CD8-positive, alpha-beta T cell (primary cell): ENCODE measurements at regions of chr4 and their contacts with region 1.

Region 1: GRCh38 chr4:98658287-98659105 is at the start of gene TSPAN5:
- DNase-seq: peak; percentile 49 to 90 (median 82)
- ATAC-seq: peak; percentile 64
- H3K4me3 ChIP-seq: peak within 1 kb of the TSS; percentile 81 to 86
- H3K4me3 Mint-ChIP-seq: peak within 1 kb of the TSS; percentile 97
- H3K27ac ChIP-seq: peak within 1 kb of the TSS; percentile 14 to 60
- H3K27ac Mint-ChIP-seq: peak within 1 kb of the TSS; percentile 88
- H3K4me1 ChIP-seq: peaks cover 56% of the 10 kb centered on the region
- H3K4me1 Mint-ChIP-seq: peaks cover 80% of the 10 kb centered on the region
- H3K27me3 ChIP-seq: no peaks in the 10 kb centered on the region
- H3K27me3 Mint-ChIP-seq: no peaks in the 10 kb centered on the region
- CTCF ChIP-seq: no peak
- total RNA-seq, gene TSPAN5: 1.6 to 1.9 TPM

Region 2: DNA sequence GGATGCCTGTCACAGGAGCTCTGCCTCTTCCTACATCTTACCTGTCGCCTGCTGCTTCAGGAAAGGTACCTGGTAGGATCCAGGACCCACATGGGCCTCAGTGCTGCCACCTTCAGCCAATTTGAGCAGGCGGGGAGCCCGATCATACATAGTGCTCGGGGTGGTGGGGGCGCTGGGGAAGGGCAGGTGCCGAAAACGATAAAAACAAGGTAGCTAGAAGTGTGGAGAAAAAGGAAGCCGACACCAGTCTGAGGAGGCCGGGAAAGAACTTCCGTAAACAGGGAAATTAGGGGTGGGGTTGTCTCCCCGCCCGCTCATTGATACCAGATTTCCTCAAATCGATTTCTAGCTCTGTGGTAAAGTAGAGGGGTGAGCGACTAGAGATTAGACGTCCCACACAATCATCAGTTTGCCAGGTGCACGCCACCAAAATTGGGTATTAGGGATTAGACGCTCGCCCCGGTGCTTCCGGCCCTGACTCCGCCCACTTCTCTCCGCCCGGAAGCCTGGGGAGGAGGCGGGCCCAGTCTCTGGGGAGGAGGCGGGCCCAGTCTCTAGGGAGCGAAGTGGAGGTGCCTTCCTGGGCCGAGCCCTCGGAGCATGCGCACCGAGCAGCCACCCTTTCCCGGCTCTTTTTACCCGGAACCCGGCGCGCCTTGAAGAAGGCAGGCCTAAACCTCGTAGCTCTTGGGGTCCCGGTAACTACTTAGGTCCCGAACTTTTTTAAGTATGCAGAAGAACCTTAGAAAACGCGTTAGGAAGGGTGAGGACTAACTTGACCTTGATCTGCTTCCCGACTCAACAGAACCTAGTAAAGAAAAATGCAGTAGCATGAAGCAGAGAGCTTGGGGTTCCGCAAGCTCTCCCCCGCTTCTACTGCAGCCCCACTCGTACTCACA is 515.2 kb before region 1 on chr4 and contains the start of gene STPG2:
- CTCF ChIA-PET with region 1: no interaction called
- POLR2A ChIA-PET with region 1: no interaction called
- intact Hi-C with region 1: loop called (anchors 2 to 5 kb)
- DNase-seq: peak; percentile 87 to 96 (median 93)
- ATAC-seq: peak; percentile 99
- H3K4me3 ChIP-seq: peak within 1 kb of the TSS; percentile 69 to 70
- H3K4me3 Mint-ChIP-seq: peak within 1 kb of the TSS; percentile 94
- H3K27ac ChIP-seq: peak within 1 kb of the TSS; percentile 68 to 90
- H3K27ac Mint-ChIP-seq: peak within 1 kb of the TSS; percentile 96
- H3K4me1 ChIP-seq: peaks cover 7% of the 10 kb centered on the region
- H3K4me1 Mint-ChIP-seq: peaks cover 17% of the 10 kb centered on the region
- H3K27me3 ChIP-seq: peaks cover 0 to 2% of the 10 kb centered on the region in 2 experiments
- H3K27me3 Mint-ChIP-seq: no peaks in the 10 kb centered on the region
- CTCF ChIP-seq: peak; percentile 64
- total RNA-seq, gene STPG2: not detected

Region 3: GRCh38 chr4:98446499-98447375 is 211.8 kb before region 1 on chr4:
- CTCF ChIA-PET with region 1: no interaction called
- POLR2A ChIA-PET with region 1: no interaction called
- intact Hi-C with region 1: loop called in 1 of 2 experiments (anchors 1 kb)
- DNase-seq: peak; percentile 18 to 88 (median 65)
- ATAC-seq: peak; percentile 87
- H3K4me3 ChIP-seq: peak overlapping the region; percentile 9 to 16
- H3K4me3 Mint-ChIP-seq: peak overlapping the region; percentile 68
- H3K27ac ChIP-seq: peak overlapping the region in 1 of 2 experiments; percentile 68
- H3K27ac Mint-ChIP-seq: peak overlapping the region; percentile 90
- H3K4me1 ChIP-seq: peaks cover 35% of the 10 kb centered on the region
- H3K4me1 Mint-ChIP-seq: peaks cover 38% of the 10 kb centered on the region
- H3K27me3 ChIP-seq: no peaks in the 10 kb centered on the region
- H3K27me3 Mint-ChIP-seq: no peaks in the 10 kb centered on the region
- CTCF ChIP-seq: no peak

Region 4: GRCh38 chr4:98546910-98547594 is 111.4 kb before region 1 on chr4:
- CTCF ChIA-PET with region 1: no interaction called
- POLR2A ChIA-PET with region 1: no interaction called
- intact Hi-C with region 1: no loop called
- DNase-seq: no peak
- ATAC-seq: no peak
- H3K4me3 ChIP-seq: no peak overlapping the region
- H3K4me3 Mint-ChIP-seq: no peak overlapping the region
- H3K27ac ChIP-seq: no peak overlapping the region
- H3K27ac Mint-ChIP-seq: no peak overlapping the region
- H3K4me1 ChIP-seq: peaks cover 9% of the 10 kb centered on the region
- H3K4me1 Mint-ChIP-seq: peaks cover 22% of the 10 kb centered on the region
- H3K27me3 ChIP-seq: no peaks in the 10 kb centered on the region
- H3K27me3 Mint-ChIP-seq: no peaks in the 10 kb centered on the region
- CTCF ChIP-seq: no peak

Region 5: GRCh38 chr4:98642991-98643426 is 15.5 kb before region 1 on chr4:
- CTCF ChIA-PET with region 1: interaction called, 9 read pairs
- POLR2A ChIA-PET with region 1: interaction called, 6 read pairs
- intact Hi-C with region 1: loop called in 1 of 2 experiments (anchors 2 kb)
- DNase-seq: no peak
- ATAC-seq: peak; percentile 39
- H3K4me3 ChIP-seq: no peak overlapping the region
- H3K4me3 Mint-ChIP-seq: no peak overlapping the region
- H3K27ac ChIP-seq: no peak overlapping the region
- H3K27ac Mint-ChIP-seq: no peak overlapping the region
- H3K4me1 ChIP-seq: peaks cover 5% of the 10 kb centered on the region
- H3K4me1 Mint-ChIP-seq: peaks cover 70% of the 10 kb centered on the region
- H3K27me3 ChIP-seq: no peaks in the 10 kb centered on the region
- H3K27me3 Mint-ChIP-seq: no peaks in the 10 kb centered on the region
- CTCF ChIP-seq: no peak

Region 6: GRCh38 chr4:98706200-98706813 is 47.8 kb after region 1 on chr4:
- CTCF ChIA-PET with region 1: interaction called, 3 read pairs
- POLR2A ChIA-PET with region 1: interaction called, 3 read pairs
- intact Hi-C with region 1: loop called in 1 of 2 experiments (anchors 5 kb)
- DNase-seq: peak in 8 of 9 experiments; percentile 5 to 79 (median 38)
- ATAC-seq: peak; percentile 95
- H3K4me3 ChIP-seq: peak overlapping the region; percentile 41 to 44
- H3K4me3 Mint-ChIP-seq: peak overlapping the region; percentile 81
- H3K27ac ChIP-seq: peak overlapping the region; percentile 23 to 82
- H3K27ac Mint-ChIP-seq: peak overlapping the region; percentile 92
- H3K4me1 ChIP-seq: peaks cover 34% of the 10 kb centered on the region
- H3K4me1 Mint-ChIP-seq: peaks cover 44% of the 10 kb centered on the region
- H3K27me3 ChIP-seq: no peaks in the 10 kb centered on the region
- H3K27me3 Mint-ChIP-seq: no peaks in the 10 kb centered on the region
- CTCF ChIP-seq: no peak

Region 7: DNA sequence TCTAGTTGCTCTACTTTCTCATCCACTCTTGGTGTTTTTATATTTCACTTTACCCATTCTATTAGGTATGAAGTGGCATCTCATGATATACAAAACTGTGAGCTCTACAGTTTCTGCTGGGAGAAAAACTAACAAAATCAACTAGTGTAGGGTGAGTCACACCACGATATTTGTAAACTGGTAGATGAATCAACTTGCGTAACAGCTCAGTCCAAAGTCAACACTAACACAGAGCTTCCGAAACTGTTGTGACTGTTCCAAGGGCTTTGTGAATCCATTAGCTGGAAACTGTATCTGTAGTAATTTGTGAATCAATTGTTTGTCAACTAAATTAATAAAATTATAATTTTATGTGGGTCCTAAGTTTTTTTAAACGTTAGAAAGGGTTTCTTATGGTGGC is 119.7 kb after region 1 on chr4:
- CTCF ChIA-PET with region 1: no interaction called
- POLR2A ChIA-PET with region 1: no interaction called
- intact Hi-C with region 1: no loop called
- DNase-seq: no peak
- ATAC-seq: no peak
- H3K4me3 ChIP-seq: no peak overlapping the region
- H3K4me3 Mint-ChIP-seq: no peak overlapping the region
- H3K27ac ChIP-seq: no peak overlapping the region
- H3K27ac Mint-ChIP-seq: no peak overlapping the region
- H3K4me1 ChIP-seq: no peaks in the 10 kb centered on the region
- H3K4me1 Mint-ChIP-seq: no peaks in the 10 kb centered on the region
- H3K27me3 ChIP-seq: no peaks in the 10 kb centered on the region
- H3K27me3 Mint-ChIP-seq: no peaks in the 10 kb centered on the region
- CTCF ChIP-seq: no peak

Region 8: DNA sequence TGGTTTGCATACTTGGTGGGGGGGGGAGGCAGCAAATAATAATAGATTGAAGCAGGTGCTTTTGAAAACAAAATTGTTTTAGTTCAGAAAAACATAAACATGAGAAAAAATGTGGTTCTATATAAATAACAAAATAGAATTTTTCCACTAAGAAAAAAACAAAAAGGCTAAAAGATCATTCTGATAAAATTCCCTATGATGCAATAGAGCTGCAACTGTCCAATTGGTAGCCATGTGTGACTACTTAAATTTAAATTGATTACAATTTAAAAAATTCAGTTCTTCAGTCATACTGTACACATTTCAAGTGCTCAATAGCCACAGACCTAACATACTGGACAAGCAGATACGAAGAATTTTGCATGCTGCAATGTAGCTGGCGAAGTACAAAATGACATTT is 894.4 kb after region 1 on chr4:
- CTCF ChIA-PET with region 1: no interaction called
- POLR2A ChIA-PET with region 1: no interaction called
- intact Hi-C with region 1: loop called in 1 of 2 experiments (anchors 10 kb)
- DNase-seq: no peak
- ATAC-seq: no peak
- H3K4me3 ChIP-seq: no peak overlapping the region
- H3K4me3 Mint-ChIP-seq: no peak overlapping the region
- H3K27ac ChIP-seq: no peak overlapping the region
- H3K27ac Mint-ChIP-seq: no peak overlapping the region
- H3K4me1 ChIP-seq: no peaks in the 10 kb centered on the region
- H3K4me1 Mint-ChIP-seq: no peaks in the 10 kb centered on the region
- H3K27me3 ChIP-seq: no peaks in the 10 kb centered on the region
- H3K27me3 Mint-ChIP-seq: no peaks in the 10 kb centered on the region
- CTCF ChIP-seq: no peak